ENCODE measurements at regions of chr10 and their contacts with region 1.

Region 1: DNA sequence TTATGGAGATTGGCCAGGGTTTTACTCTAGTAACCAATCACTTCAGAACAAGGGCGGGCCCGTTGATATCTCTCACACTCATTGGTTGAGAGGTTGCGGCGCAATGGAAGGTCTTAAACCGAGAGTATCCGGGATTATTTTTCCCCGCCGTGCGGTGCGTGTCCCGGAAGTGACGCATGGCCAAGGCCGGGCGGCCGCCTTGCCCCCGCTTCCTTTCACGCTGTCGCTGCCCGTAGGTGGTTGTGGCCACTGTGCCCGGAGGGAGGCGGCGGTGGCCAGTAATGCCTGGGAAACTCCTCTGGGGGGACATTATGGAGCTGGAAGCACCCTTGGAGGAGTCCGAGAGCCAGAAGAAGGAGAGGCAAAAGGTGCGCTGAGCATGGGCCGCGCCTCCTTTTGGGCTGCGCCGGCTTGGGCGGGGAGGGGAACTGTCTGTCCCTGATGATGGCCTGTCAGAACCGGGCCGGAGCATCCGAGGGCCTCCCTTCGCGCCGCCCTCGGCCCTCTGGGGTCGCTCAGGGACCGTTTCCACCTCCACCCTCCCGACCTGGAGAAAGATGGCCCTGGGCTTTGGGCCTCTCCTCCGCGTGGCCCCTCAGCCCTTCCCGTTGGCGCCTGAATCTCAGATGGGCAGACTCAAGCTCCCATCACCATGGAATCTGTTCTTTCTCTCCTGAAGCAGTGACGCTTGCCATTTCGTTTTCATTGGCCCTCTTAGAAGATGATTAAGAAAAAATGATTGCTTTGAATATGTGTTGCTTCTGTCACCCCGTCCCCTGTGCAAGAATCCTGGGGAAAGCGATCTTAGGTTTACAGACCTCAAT is at the start of gene DDX50:
- DNase-seq: peak; percentile 99
- H3K4me3 ChIP-seq: peak within 1 kb of the TSS; percentile 62 to 92 (median 79)
- H3K27ac ChIP-seq: peak within 1 kb of the TSS; percentile 94
- H3K4me1 ChIP-seq: peaks cover 14% of the 10 kb centered on the region
- H3K27me3 ChIP-seq: no peaks in the 10 kb centered on the region
- CTCF ChIP-seq: peak in 1 of 2 donors; percentile 14
- POLR2A ChIP-seq: peak; percentile 91
- total RNA-seq, gene DDX50: 25.9 and 28.2 TPM in 2 replicates

Region 2: GRCh38 chr10:68406815-68407548 is 494.3 kb before region 1 on chr10 and contains the start of gene RUFY2:
- CTCF ChIA-PET with region 1: interaction called, 3 read pairs
- POLR2A ChIA-PET with region 1: no interaction called
- dilution Hi-C with region 1: no loop called
- intact Hi-C with region 1: loop called (anchors 1 kb)
- DNase-seq: peak; percentile 79
- H3K4me3 ChIP-seq: peak within 1 kb of the TSS; percentile 67 to 93 (median 88)
- H3K27ac ChIP-seq: peak within 1 kb of the TSS; percentile 50
- H3K4me1 ChIP-seq: peaks cover 6% of the 10 kb centered on the region
- H3K27me3 ChIP-seq: no peaks in the 10 kb centered on the region
- CTCF ChIP-seq: peak; percentile 53 to 91
- POLR2A ChIP-seq: peak; percentile 45
- total RNA-seq, gene RUFY2: 24.2 and 26.1 TPM in 2 replicates

Region 3: GRCh38 chr10:68720793-68721672 is 180.3 kb before region 1 on chr10 and contains the start of gene CCAR1:
- CTCF ChIA-PET with region 1: no interaction called
- POLR2A ChIA-PET with region 1: no interaction called
- dilution Hi-C with region 1: no loop called
- intact Hi-C with region 1: loop called (anchors 2 kb)
- DNase-seq: peak; percentile 99
- H3K4me3 ChIP-seq: peak within 1 kb of the TSS; percentile 55 to 97 (median 78)
- H3K27ac ChIP-seq: peak within 1 kb of the TSS; percentile 85
- H3K4me1 ChIP-seq: peaks cover 10% of the 10 kb centered on the region
- H3K27me3 ChIP-seq: no peaks in the 10 kb centered on the region
- CTCF ChIP-seq: no peak
- POLR2A ChIP-seq: peak; percentile 91
- total RNA-seq, gene CCAR1: 83.3 and 92.9 TPM in 2 replicates

Region 4: DNA sequence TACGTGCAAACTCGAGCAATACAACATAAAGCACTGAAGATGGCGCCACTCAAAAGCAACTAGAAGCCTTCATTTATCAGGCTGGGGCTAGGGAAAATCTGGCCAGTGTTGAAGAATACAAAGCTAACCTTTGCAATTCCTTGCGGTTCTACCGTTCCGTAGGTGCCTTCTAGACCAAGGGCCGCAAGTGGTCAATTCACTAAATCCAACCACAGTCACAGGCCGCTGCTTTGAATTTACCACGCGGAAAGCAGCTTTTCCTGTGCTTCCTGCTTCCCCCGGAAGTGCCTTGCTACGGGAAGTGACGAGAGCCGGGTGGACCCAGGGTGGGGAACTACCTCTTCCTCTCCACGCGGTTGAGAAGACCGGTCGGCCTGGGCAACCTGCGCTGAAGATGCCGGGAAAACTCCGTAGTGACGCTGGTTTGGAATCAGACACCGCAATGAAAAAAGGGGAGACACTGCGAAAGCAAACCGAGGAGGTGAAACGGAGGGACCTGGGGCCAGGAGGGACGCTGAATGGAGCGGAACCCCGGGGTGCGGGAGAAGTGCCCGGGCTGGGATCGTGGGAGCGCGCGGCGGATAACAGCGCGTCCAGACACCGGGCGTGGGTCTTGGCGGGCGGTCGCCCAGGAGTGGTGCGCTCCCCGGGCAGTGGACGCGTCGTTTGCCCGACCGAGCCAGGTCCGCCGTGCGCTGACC is 54.7 kb after region 1 on chr10 and contains the start of gene DDX21:
- CTCF ChIA-PET with region 1: interaction called, 3 read pairs
- POLR2A ChIA-PET with region 1: no interaction called
- dilution Hi-C with region 1: no loop called
- intact Hi-C with region 1: loop called (anchors 1 kb)
- DNase-seq: peak; percentile 92
- H3K4me3 ChIP-seq: peak within 1 kb of the TSS; percentile 40 to 98 (median 80)
- H3K27ac ChIP-seq: peak within 1 kb of the TSS; percentile 69
- H3K4me1 ChIP-seq: peaks cover 20% of the 10 kb centered on the region
- H3K27me3 ChIP-seq: no peaks in the 10 kb centered on the region
- CTCF ChIP-seq: peak; percentile 51 to 59
- POLR2A ChIP-seq: peak; percentile 91
- total RNA-seq, gene DDX21: 93.5 and 98.1 TPM in 2 replicates

Region 5: GRCh38 chr10:69172241-69172982 is 271.1 kb after region 1 on chr10:
- CTCF ChIA-PET with region 1: no interaction called
- POLR2A ChIA-PET with region 1: no interaction called
- dilution Hi-C with region 1: no loop called
- intact Hi-C with region 1: no loop called
- DNase-seq: no peak
- H3K4me3 ChIP-seq: no peak overlapping the region
- H3K27ac ChIP-seq: no peak overlapping the region
- H3K4me1 ChIP-seq: no peaks in the 10 kb centered on the region
- H3K27me3 ChIP-seq: no peaks in the 10 kb centered on the region
- CTCF ChIP-seq: no peak
- POLR2A ChIP-seq: no peak